Breast epithelium (tissue), 4 donors: ENCODE measurements at regions of chr12 and their contacts with region 1.

Region 1: DNA sequence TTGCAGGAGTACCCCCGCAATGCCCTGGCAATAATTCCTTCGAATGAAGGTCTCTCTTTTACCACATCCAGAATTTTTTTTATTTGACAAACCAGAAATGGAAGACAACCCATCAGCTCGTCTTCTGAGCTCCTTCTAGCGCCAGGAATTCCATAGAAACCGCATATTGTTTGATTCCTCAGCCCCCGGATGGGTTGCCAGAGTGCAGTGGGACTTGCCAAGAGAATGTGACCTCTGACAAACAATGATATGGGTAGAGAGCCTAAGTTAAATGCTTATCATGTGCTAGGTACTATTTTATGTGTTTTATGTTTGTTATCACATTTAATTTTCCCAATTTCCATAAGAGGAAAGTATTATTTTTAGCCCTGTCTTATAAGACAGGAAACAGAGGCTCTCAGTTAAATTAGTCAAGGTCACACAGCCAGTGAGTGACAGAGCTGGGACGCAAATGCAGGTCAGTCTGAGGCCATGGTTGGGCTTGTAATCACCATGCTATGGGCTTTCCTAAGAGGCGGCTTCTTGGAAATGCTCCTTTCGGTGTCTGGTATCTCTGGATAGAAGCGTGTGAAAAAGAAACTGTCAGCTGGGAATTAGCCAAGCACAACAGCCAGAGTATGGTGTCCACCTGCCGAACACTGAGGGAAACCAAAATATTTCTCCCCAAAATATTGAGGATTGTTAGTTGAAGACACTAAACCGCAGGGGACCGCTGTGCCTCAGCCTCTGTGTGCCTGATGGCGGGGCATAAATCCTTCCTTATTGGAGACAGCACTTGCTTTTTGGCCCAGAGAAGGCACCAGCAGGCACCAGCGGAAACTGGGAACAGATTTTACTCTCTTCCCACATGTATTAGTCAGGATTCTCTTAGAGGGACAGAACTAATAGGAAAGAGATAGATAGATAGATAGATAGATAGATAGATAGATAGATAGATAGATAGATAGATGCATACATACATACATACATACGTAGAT is 29.4 kb upstream of the ETFBKMT start:
- DNase-seq: no peak
- H3K4me3 ChIP-seq: no peak overlapping the region
- H3K27ac ChIP-seq: no peak overlapping the region
- H3K4me1 ChIP-seq: no peaks in the 10 kb centered on the region
- H3K27me3 ChIP-seq: no peaks in the 10 kb centered on the region
- CTCF ChIP-seq: no peak
- POLR2A ChIP-seq: no peak

Region 2: DNA sequence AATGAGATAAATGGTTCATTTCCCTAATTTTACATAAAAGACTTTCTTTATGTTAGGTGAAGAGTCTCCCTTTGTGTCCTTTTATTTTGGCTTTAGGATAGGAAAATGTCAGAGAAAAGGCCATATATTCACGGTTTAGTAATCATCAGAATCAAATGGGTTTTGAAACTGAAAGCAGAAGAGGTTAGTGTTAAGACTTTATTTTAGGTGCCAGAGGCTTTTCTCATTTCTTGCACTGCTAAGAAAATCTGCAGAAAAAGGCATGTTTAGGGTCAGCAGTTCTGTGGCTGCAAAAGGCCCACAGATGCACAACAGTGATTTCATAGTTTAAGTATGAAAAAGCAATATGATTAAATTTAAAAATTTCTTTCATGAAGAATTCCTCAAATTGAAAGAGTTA is 223.7 kb before region 1 on chr12:
- intact Hi-C with region 1: loop called (anchors 10 kb)
- DNase-seq: no peak
- H3K4me3 ChIP-seq: no peak overlapping the region
- H3K27ac ChIP-seq: no peak overlapping the region
- H3K4me1 ChIP-seq: no peaks in the 10 kb centered on the region
- H3K27me3 ChIP-seq: no peaks in the 10 kb centered on the region
- CTCF ChIP-seq: no peak
- POLR2A ChIP-seq: no peak

Region 3: DNA sequence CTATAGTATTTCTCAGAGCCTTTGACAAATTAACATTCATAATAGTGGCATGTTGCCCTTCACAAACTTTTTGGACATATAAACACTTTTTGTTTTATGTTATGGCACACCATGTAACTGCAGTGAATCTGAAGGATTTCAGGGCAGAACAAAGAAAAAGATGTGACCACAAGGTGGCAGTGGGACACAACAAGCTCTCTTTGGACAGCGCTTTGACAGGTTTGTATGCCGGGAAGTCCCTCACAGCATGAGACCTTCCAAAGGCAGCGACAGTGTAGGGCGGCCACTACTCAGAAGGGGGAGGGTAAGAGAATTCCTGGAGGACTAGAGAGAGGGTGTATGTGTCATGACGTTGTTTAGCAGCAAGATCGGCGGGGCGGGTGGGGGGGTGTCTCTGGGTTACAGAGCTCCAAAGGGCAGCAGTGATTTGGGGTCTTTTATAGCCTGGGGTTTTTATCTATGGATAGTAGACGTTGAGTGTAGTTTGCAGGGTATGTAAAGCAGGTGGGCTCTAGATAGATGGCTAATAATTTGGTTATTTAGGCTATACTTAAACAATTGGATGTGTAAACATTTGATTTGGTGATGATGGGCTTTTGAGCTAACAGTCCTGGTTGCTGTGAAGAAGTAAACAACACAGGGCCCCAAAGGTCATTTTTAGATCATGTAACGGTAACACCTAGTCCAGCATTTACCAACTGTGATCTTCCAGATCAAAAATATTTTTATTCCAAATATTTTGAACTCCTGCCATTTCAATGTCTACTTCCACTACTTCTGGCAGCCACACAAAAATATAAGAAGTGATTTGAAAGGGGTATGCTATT is 52.3 kb after region 1 on chr12:
- intact Hi-C with region 1: no loop called
- DNase-seq: peak in 1 of 2 donors; percentile 27
- H3K4me3 ChIP-seq: no peak overlapping the region
- H3K27ac ChIP-seq: no peak overlapping the region
- H3K4me1 ChIP-seq: no peaks in the 10 kb centered on the region
- H3K27me3 ChIP-seq: no peaks in the 10 kb centered on the region
- CTCF ChIP-seq: peak in 2 of 3 donors; percentile 49 to 50
- POLR2A ChIP-seq: no peak